ENCODE measurements at regions of chr12 and their contacts with region 1.

Region 1: GRCh38 chr12:67661311-67662021 is 12.9 kb downstream of the DYRK2 start:
- DNase-seq: peak in 1 of 2 donors; percentile 30
- ATAC-seq: peak; percentile 77 to 83
- H3K4me3 ChIP-seq: no peak overlapping the region
- H3K27ac ChIP-seq: peak overlapping the region; percentile 80 to 98 (median 81)
- H3K4me1 ChIP-seq: peaks cover 84 to 97% of the 10 kb centered on the region in 2 donors
- H3K27me3 ChIP-seq: no peaks in the 10 kb centered on the region
- CTCF ChIP-seq: no peak
- POLR2A ChIP-seq: no peak

Region 2: DNA sequence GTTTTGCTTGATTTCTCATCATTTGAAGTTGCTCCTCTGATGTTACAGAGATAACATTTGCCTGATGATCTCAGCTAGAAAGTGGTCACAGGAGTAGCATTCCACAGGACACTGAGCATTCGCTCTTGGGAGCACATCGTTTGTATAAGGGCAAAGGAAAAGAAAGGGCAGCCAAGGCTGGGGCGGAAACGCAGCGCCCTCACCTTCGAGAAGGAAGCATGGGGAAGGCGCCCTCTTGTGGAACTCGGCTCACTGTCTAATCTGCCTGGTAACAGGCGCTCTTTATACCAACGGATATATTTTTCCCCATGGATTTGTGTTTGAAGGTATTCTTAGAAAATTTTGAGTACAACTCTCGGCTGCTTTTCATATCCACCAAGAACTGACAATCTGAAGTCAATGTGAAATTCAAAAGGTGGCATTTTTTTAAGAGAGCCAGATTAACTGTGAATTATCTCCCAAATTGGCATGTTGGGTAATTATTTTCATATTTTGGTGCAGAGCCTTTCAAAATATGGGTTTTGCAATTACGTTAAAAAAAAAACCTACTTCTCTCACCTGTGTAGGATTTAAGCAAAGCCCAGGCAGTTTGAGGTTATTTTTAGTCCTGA is 219.6 kb before region 1 on chr12:
- in situ Hi-C with region 1: no loop called
- intact Hi-C with region 1: loop called (anchors 5 kb)
- DNase-seq: peak; percentile 78 to 88
- ATAC-seq: peak; percentile 95 to 99
- H3K4me3 ChIP-seq: peak overlapping the region; percentile 45 to 55 (median 50)
- H3K27ac ChIP-seq: peak overlapping the region; percentile 70 to 86 (median 76)
- H3K4me1 ChIP-seq: peaks cover 13 to 18% of the 10 kb centered on the region in 2 donors
- H3K27me3 ChIP-seq: no peaks in the 10 kb centered on the region
- CTCF ChIP-seq: peak; percentile 69 to 86 (median 75)
- POLR2A ChIP-seq: no peak

Measured in gastrocnemius medialis (tissue), 4 donors.